ENCODE measurements at regions of chr10 and their contacts with region 1.

Region 1: GRCh38 chr10:101214446-101215396 is 14.5 kb downstream of the LBX1 start:
- DNase-seq: peak; percentile 88
- H3K4me3 ChIP-seq: peak overlapping the region in 1 of 8 donors; percentile 60
- H3K27ac ChIP-seq: no peak overlapping the region
- H3K4me1 ChIP-seq: peaks cover 29 to 54% (median 48%) of the 10 kb centered on the region in 6 donors
- H3K27me3 ChIP-seq: peaks cover 46 to 100% (median 94%) of the 10 kb centered on the region in 7 donors
- CTCF ChIP-seq: peak; percentile 50 to 92 (median 86)
- POLR2A ChIP-seq: no peak

Region 2: GRCh38 chr10:101287997-101288635 is 73.4 kb after region 1 on chr10:
- intact Hi-C with region 1: loop called (anchors 5 kb)
- DNase-seq: no peak
- H3K4me3 ChIP-seq: no peak overlapping the region
- H3K27ac ChIP-seq: no peak overlapping the region
- H3K4me1 ChIP-seq: peaks cover 9 to 64% (median 35%) of the 10 kb centered on the region in 6 donors
- H3K27me3 ChIP-seq: peaks cover 7 to 100% (median 81%) of the 10 kb centered on the region in 7 donors
- CTCF ChIP-seq: peak in 2 of 11 experiments; percentile 29
- POLR2A ChIP-seq: no peak

Region 3: DNA sequence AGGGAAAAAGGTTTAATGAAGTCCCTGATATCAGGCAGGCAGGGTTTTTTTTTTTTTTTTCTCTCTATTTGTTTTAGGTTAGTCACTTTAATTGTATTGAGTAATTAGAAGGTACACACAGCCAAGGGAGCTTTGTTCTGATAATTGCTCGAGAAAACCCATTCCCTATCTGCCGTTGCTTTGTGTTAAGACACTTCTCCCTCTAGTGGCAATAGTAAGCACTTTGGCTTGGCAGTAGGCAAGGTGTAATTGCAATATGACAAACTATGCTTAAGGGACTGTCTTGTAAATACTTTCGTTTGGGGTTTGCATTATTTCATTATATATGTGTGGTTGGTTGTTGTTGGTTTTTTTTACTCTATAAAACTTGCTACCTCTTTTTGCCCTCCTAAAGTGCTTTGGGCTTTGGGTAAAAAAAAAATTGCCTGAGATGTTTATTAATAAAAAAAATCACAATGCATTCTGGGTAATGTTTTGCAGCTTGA is 252.6 kb after region 1 on chr10:
- intact Hi-C with region 1: loop called (anchors 10 kb)
- DNase-seq: no peak
- H3K4me3 ChIP-seq: no peak overlapping the region
- H3K27ac ChIP-seq: no peak overlapping the region
- H3K4me1 ChIP-seq: peaks cover 0 to 13% (median 7%) of the 10 kb centered on the region in 6 donors
- H3K27me3 ChIP-seq: no peaks in the 10 kb centered on the region
- CTCF ChIP-seq: peak; percentile 47 to 85 (median 76)
- POLR2A ChIP-seq: no peak

Region 4: GRCh38 chr10:101569838-101570766 is 355.4 kb after region 1 on chr10:
- intact Hi-C with region 1: loop called (anchors 5 kb)
- DNase-seq: peak; percentile 94
- H3K4me3 ChIP-seq: peak overlapping the region; percentile 38 to 89 (median 58)
- H3K27ac ChIP-seq: peak overlapping the region in 2 of 8 donors; percentile 25 to 27
- H3K4me1 ChIP-seq: peaks cover 15 to 38% (median 29%) of the 10 kb centered on the region in 6 donors
- H3K27me3 ChIP-seq: peaks cover 2 to 62% (median 39%) of the 10 kb centered on the region in 7 donors
- CTCF ChIP-seq: peak; percentile 62 to 99 (median 93)
- POLR2A ChIP-seq: no peak

Region 5: GRCh38 chr10:101782811-101783735 is 568.4 kb after region 1 on chr10 and contains the start of gene NPM3:
- intact Hi-C with region 1: loop called (anchors 5 kb)
- DNase-seq: peak; percentile 94
- H3K4me3 ChIP-seq: peak within 1 kb of the TSS; percentile 30 to 88 (median 64)
- H3K27ac ChIP-seq: peak within 1 kb of the TSS; percentile 37 to 81 (median 50)
- H3K4me1 ChIP-seq: peaks cover 14 to 81% (median 66%) of the 10 kb centered on the region in 6 donors
- H3K27me3 ChIP-seq: peaks cover 0 to 22% (median 18%) of the 10 kb centered on the region in 7 donors
- CTCF ChIP-seq: no peak
- POLR2A ChIP-seq: no peak
- total RNA-seq, gene NPM3: 16.8 to 46.9 (median 24.6) TPM

Measured in spleen (tissue), 13 donors.